ENCODE measurements at regions of chr20 and their contacts with region 1.

Region 1: GRCh38 chr20:58650776-58651558 is at the start of gene STX16:
- DNase-seq: peak; percentile 76 to 95 (median 86)
- ATAC-seq: peak; percentile 63
- H3K4me3 ChIP-seq: peak within 1 kb of the TSS; percentile 86 to 96
- H3K4me3 Mint-ChIP-seq: peak within 1 kb of the TSS; percentile 99
- H3K27ac ChIP-seq: peak within 1 kb of the TSS; percentile 87 to 92
- H3K27ac Mint-ChIP-seq: peak within 1 kb of the TSS; percentile 99
- H3K4me1 ChIP-seq: peaks cover 30% of the 10 kb centered on the region
- H3K4me1 Mint-ChIP-seq: peaks cover 27% of the 10 kb centered on the region
- H3K27me3 ChIP-seq: no peaks in the 10 kb centered on the region
- H3K27me3 Mint-ChIP-seq: no peaks in the 10 kb centered on the region
- CTCF ChIP-seq: peak; percentile 88
- total RNA-seq, gene STX16: 161 to 177 TPM

Region 2: GRCh38 chr20:57398231-57398821 is 1252.6 kb before region 1 on chr20:
- CTCF ChIA-PET with region 1: no interaction called
- POLR2A ChIA-PET with region 1: interaction called, 4 read pairs
- intact Hi-C with region 1: loop called (anchors 5 kb)
- DNase-seq: peak; percentile 88 to 98 (median 96)
- ATAC-seq: peak; percentile 69
- H3K4me3 ChIP-seq: peak overlapping the region; percentile 40 to 63
- H3K4me3 Mint-ChIP-seq: peak overlapping the region; percentile 76
- H3K27ac ChIP-seq: peak overlapping the region; percentile 78 to 90
- H3K27ac Mint-ChIP-seq: peak overlapping the region; percentile 97
- H3K4me1 ChIP-seq: peaks cover 96% of the 10 kb centered on the region
- H3K4me1 Mint-ChIP-seq: peaks cover 93% of the 10 kb centered on the region
- H3K27me3 ChIP-seq: no peaks in the 10 kb centered on the region
- H3K27me3 Mint-ChIP-seq: no peaks in the 10 kb centered on the region
- CTCF ChIP-seq: no peak

Region 3: GRCh38 chr20:58228484-58229197 is 422.3 kb before region 1 on chr20 and contains the start of gene ANKRD60:
- CTCF ChIA-PET with region 1: no interaction called
- POLR2A ChIA-PET with region 1: interaction called, 3 read pairs
- intact Hi-C with region 1: loop called in 1 of 2 experiments (anchors 2 kb)
- DNase-seq: peak in 7 of 9 experiments; percentile 8 to 86 (median 81)
- ATAC-seq: peak; percentile 95
- H3K4me3 ChIP-seq: peak within 1 kb of the TSS in 1 of 2 experiments; percentile 27
- H3K4me3 Mint-ChIP-seq: peak within 1 kb of the TSS; percentile 67
- H3K27ac ChIP-seq: no peak within 1 kb of the TSS
- H3K27ac Mint-ChIP-seq: peak within 1 kb of the TSS; percentile 74
- H3K4me1 ChIP-seq: peaks cover 7% of the 10 kb centered on the region
- H3K4me1 Mint-ChIP-seq: peaks cover 12% of the 10 kb centered on the region
- H3K27me3 ChIP-seq: peaks cover 18 to 19% of the 10 kb centered on the region in 2 experiments
- H3K27me3 Mint-ChIP-seq: peaks cover 58% of the 10 kb centered on the region
- CTCF ChIP-seq: no peak
- total RNA-seq, gene ANKRD60: not detected

Region 4: DNA sequence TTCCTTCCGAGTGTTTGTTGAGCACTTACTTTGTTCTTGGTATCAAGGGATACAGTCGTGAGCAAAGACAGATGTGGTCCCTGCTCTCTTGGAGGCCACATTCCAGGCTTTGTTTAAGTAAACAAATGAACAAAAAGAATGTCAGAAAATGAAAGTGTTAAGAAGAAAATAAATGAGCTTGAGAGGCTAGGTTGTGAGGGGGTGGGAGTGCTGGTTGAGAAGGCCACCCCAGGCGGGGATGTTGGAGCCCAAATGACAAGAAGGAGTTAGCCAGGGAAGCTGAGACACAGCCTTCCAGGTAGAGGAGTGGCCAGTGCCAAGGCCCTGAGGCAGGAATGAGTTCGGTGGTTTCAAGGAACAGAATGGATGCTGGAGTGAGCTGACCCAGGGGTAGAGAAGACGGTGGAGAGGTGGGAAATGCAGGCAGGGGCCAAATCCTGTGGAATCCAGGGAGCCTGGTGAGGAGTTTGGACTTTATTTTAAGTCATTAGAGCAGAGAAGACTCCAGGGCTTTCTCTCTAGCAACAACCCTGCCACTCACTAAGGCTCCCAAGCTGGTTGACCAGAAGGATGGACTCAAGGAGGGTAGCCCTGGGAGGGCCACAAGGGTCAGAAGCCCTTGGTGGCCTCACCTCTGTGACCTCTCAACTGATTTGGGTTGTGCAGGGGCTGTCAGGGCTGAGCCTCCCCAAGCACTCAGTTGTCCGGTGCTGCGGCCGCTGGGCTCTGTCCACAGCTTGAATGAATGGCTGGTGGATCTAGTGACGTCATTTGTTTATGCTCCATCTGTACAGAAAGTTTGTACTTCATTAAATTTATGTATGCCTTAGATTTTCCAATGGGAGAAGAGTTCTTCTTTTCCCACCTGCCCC is 65.8 kb before region 1 on chr20:
- CTCF ChIA-PET with region 1: no interaction called
- POLR2A ChIA-PET with region 1: no interaction called
- intact Hi-C with region 1: no loop called
- DNase-seq: no peak
- ATAC-seq: no peak
- H3K4me3 ChIP-seq: no peak overlapping the region
- H3K4me3 Mint-ChIP-seq: no peak overlapping the region
- H3K27ac ChIP-seq: no peak overlapping the region
- H3K27ac Mint-ChIP-seq: no peak overlapping the region
- H3K4me1 ChIP-seq: no peaks in the 10 kb centered on the region
- H3K4me1 Mint-ChIP-seq: no peaks in the 10 kb centered on the region
- H3K27me3 ChIP-seq: no peaks in the 10 kb centered on the region
- H3K27me3 Mint-ChIP-seq: peaks cover 17% of the 10 kb centered on the region
- CTCF ChIP-seq: no peak

Region 5: DNA sequence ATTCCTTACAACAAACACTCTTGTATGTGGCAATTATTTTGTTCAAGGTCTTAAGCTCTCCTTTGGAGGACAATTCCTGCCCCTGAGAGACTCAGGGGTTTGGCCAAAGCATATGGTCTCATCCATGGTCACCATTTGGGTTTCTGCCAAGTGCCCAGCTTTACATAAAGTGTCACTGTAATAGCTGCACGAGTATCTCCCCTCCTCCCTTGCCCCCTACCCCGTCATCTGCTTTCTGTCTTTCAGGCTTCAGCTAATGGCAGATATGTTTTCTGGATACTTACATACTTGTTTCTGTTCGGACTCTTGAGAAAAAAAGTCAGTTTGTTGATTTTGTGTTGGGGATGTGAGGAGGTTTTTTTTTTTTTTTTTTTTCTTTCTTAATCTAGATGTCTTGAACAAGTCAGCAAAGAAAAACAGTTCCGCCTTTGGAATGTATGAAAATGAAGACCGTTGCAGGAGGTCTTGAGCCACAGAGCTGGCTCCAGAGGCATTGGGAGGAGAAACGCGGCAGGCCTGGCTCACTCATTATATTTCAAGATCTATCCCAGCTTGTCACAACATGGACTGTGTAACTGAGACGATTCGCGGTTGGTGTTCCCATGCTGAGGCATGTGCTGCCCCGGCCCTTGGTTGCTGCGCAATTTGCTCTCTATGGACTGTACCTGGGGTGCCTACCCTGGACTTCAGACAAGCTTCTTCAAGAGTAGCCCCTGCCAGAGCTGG is 32.5 kb before region 1 on chr20:
- CTCF ChIA-PET with region 1: no interaction called
- POLR2A ChIA-PET with region 1: no interaction called
- intact Hi-C with region 1: no loop called
- DNase-seq: no peak
- ATAC-seq: no peak
- H3K4me3 ChIP-seq: no peak overlapping the region
- H3K4me3 Mint-ChIP-seq: no peak overlapping the region
- H3K27ac ChIP-seq: no peak overlapping the region
- H3K27ac Mint-ChIP-seq: no peak overlapping the region
- H3K4me1 ChIP-seq: no peaks in the 10 kb centered on the region
- H3K4me1 Mint-ChIP-seq: no peaks in the 10 kb centered on the region
- H3K27me3 ChIP-seq: peaks cover 0 to 6% of the 10 kb centered on the region in 2 experiments
- H3K27me3 Mint-ChIP-seq: peaks cover 24% of the 10 kb centered on the region
- CTCF ChIP-seq: no peak

Region 6: DNA sequence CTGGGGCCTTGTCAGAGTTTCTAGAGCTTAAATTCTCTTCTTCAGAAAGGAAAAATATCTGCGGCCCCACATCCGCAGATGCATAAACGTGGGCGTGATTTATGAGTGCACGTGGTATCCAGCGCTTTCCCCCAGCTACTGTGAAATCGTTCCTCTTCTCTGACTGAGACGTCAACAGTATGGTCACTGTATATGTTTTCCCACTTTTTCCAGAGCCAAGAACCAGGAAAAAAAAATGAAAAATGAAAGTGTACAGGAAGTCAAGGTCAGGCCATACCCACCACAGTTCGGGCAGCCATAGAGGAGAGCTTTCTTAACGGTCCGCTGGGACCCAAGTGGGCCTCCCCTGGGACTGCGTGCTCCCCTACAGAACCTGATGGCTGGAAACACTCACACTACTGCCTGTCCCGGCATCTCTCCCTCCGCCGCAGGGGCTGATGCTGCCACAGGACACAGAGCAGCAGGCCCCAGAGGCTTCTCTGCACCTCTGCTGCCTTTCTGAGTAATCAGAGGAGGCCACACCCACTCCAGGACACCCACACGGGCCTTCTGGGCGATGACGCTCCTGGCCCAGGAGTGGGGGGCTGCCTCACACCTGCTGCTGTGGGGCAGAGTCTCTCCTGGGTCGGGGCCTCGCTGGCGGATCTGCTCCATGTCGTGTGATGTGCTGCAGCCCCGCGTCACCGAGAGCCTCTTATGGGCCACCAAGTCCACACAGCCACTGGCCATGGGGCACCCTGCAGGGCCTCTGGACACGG is 16.3 kb before region 1 on chr20:
- CTCF ChIA-PET with region 1: interaction called, 5 read pairs
- POLR2A ChIA-PET with region 1: interaction called, 28 read pairs
- intact Hi-C with region 1: loop called in 1 of 2 experiments (anchors 2 kb)
- DNase-seq: peak in 5 of 9 experiments; percentile 39 to 56 (median 52)
- ATAC-seq: peak; percentile 77
- H3K4me3 ChIP-seq: peak overlapping the region in 1 of 2 experiments; percentile 13
- H3K4me3 Mint-ChIP-seq: peak overlapping the region; percentile 74
- H3K27ac ChIP-seq: peak overlapping the region; percentile 39 to 53
- H3K27ac Mint-ChIP-seq: peak overlapping the region; percentile 89
- H3K4me1 ChIP-seq: peaks cover 28% of the 10 kb centered on the region
- H3K4me1 Mint-ChIP-seq: peaks cover 21% of the 10 kb centered on the region
- H3K27me3 ChIP-seq: no peaks in the 10 kb centered on the region
- H3K27me3 Mint-ChIP-seq: peaks cover under 1% of the 10 kb centered on the region
- CTCF ChIP-seq: no peak

Region 7: DNA sequence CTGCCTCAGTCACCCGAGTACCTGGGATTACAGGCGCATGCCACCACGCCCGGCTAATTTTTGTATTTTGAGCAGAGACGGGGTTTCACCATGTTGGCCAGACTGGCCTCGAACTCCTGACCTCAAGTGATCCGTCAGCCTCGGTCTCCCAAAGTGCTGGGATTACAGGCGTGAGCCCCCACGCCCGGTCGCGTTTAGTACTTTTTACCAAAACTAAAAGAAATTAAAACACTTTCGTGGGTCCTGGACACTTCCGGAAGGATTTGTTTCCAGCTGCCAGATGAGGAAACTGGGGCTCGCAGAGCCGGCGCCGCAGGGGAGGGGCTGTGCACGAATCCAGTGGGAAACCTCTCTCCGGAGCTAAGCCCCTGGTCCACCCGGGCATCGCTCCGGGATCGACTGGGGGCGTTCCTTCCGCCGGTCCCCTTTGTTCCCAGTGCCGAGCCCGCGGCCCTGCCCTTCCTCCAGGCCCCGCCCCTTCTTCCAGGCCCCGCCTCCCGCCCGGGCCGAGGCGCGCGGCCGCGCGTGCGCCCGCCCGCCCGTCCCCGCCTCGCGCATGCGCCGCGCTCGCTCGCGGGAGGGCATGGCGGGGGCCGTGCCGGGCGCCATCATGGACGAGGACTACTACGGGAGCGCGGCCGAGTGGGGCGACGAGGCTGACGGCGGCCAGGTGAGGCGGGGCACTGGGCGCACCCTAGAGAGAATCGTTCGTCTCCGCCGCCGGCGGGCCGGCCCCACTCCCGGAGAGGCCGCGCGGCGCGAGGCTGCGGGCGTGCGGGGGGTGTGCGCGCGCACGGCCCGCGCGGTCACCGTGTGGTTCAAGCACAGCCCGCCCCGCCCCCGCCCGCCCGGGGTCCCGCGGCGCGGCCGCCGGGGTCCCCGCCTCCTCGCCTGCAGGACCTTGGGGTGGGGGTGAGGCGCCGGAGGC is 330.0 kb after region 1 on chr20 and contains the start of gene NELFCD:
- CTCF ChIA-PET with region 1: no interaction called
- POLR2A ChIA-PET with region 1: no interaction called
- intact Hi-C with region 1: loop called (anchors 1 to 5 kb)
- DNase-seq: peak; percentile 81 to 94 (median 89)
- ATAC-seq: peak; percentile 87
- H3K4me3 ChIP-seq: peak within 1 kb of the TSS; percentile 77 to 93
- H3K4me3 Mint-ChIP-seq: peak within 1 kb of the TSS; percentile 93
- H3K27ac ChIP-seq: peak within 1 kb of the TSS; percentile 62 to 66
- H3K27ac Mint-ChIP-seq: peak within 1 kb of the TSS; percentile 94
- H3K4me1 ChIP-seq: peaks cover 29% of the 10 kb centered on the region
- H3K4me1 Mint-ChIP-seq: peaks cover 39% of the 10 kb centered on the region
- H3K27me3 ChIP-seq: no peaks in the 10 kb centered on the region
- H3K27me3 Mint-ChIP-seq: no peaks in the 10 kb centered on the region
- CTCF ChIP-seq: no peak
- total RNA-seq, gene NELFCD: 101 to 113 TPM

Region 8: DNA sequence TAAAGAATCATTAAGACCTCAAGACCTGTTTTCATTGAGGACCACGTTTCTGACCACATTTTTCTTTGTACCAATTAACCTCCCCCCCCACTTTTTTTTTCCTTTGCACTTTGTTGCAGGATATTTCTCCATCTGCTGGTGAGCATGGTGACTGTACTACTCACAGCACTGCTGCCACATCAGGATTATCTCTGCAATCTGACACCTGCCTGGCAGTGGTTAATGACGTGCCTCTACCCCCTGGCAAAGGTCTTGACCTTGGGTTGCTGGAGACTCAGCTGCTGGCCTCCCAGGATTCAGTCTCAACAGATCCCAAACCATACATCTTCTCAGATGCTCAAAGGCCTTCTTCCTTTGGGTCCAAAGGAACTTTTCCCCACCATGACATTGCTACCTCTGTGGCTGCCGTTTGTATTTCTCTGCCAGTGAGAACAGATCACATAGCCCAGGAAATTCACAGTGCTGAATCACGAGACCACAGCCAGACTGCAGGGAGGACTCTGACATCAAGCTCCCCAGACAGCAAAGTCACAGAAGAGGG is 602.9 kb after region 1 on chr20:
- CTCF ChIA-PET with region 1: no interaction called
- POLR2A ChIA-PET with region 1: no interaction called
- intact Hi-C with region 1: loop called in 1 of 2 experiments (anchors 10 kb)
- DNase-seq: peak in 7 of 9 experiments; percentile 26 to 70 (median 40)
- ATAC-seq: peak; percentile 61
- H3K4me3 ChIP-seq: peak overlapping the region in 1 of 2 experiments; percentile 18
- H3K4me3 Mint-ChIP-seq: peak overlapping the region; percentile 75
- H3K27ac ChIP-seq: peak overlapping the region; percentile 57 to 59
- H3K27ac Mint-ChIP-seq: peak overlapping the region; percentile 98
- H3K4me1 ChIP-seq: peaks cover 53% of the 10 kb centered on the region
- H3K4me1 Mint-ChIP-seq: peaks cover 74% of the 10 kb centered on the region
- H3K27me3 ChIP-seq: no peaks in the 10 kb centered on the region
- H3K27me3 Mint-ChIP-seq: no peaks in the 10 kb centered on the region
- CTCF ChIP-seq: no peak